Naive thymus-derived CD8-positive, alpha-beta T cell (primary cell): ENCODE measurements at regions of chr1 and their contacts with region 1.

Region 1: GRCh38 chr1:27489910-27490741 is at the start of gene WASF2:
- DNase-seq: peak; percentile 93 to 99 (median 97)
- ATAC-seq: peak; percentile 91 to 95
- H3K4me3 Mint-ChIP-seq: peak within 1 kb of the TSS; percentile 92 to 99 (median 96)
- H3K27ac Mint-ChIP-seq: peak within 1 kb of the TSS; percentile 97 to 100 (median 99)
- H3K4me1 Mint-ChIP-seq: peaks cover 17 to 55% (median 38%) of the 10 kb centered on the region in 4 donors
- H3K27me3 Mint-ChIP-seq: no peaks in the 10 kb centered on the region
- polyA plus RNA-seq, gene WASF2: 54.8 to 68.9 (median 68.5) TPM

Region 2: GRCh38 chr1:27321813-27322577 is 168.1 kb before region 1 on chr1 and contains the start of gene TMEM222:
- POLR2A ChIA-PET with region 1: no interaction called
- DNase-seq: peak; percentile 95 to 98 (median 96)
- ATAC-seq: peak; percentile 96
- H3K4me3 Mint-ChIP-seq: peak within 1 kb of the TSS; percentile 93 to 99 (median 95)
- H3K27ac Mint-ChIP-seq: peak within 1 kb of the TSS; percentile 93 to 97 (median 96)
- H3K4me1 Mint-ChIP-seq: peaks cover 18 to 54% (median 48%) of the 10 kb centered on the region in 4 donors
- H3K27me3 Mint-ChIP-seq: peaks cover 0 to 8% (median 0%) of the 10 kb centered on the region in 5 donors
- polyA plus RNA-seq, gene TMEM222: 54.1 to 57.1 (median 56.9) TPM

Region 3: DNA sequence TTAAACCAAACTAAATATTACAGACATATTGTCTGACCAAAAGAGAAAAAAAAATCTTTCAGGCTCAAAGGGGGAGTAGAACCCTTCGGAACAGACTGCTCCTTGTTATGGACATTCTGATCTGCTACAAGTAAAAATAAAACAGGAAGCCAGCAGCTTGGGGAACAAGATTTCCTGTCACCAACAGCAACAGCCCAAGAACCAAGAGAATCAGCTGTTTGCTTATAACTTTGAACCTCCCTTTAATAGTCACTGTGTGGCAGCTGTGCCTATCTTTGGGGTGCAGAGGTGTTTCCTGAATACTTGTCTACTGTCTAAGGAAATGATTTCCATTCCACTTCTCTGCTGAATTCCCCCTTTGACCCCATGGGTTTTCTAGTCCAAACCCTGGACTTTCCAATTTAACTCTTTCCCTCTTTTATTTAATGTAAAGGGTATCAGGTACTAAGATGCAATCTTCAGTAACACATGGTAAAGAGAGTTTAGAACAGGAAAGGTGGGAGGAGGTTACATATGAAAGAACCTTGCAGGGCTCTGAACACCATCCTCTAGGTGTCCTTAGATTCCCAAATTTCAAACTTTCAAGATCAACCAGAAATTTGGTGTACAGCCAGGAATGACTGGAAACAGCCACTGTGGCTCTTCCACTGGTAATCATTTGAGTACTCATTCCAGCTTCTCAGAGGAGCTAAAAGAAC is 59.1 kb before region 1 on chr1:
- POLR2A ChIA-PET with region 1: interaction called, 24 read pairs
- DNase-seq: peak in 6 of 10 donors; percentile 30 to 68 (median 42)
- ATAC-seq: peak; percentile 74 to 85
- H3K4me3 Mint-ChIP-seq: peak overlapping the region; percentile 29 to 91 (median 77)
- H3K27ac Mint-ChIP-seq: peak overlapping the region; percentile 40 to 96 (median 90)
- H3K4me1 Mint-ChIP-seq: peaks cover 42 to 95% (median 88%) of the 10 kb centered on the region in 4 donors
- H3K27me3 Mint-ChIP-seq: no peaks in the 10 kb centered on the region

Region 4: GRCh38 chr1:27436204-27437159 is 53.6 kb before region 1 on chr1:
- POLR2A ChIA-PET with region 1: interaction called, 24 read pairs
- DNase-seq: peak in 3 of 10 donors; percentile 12 to 50 (median 48)
- ATAC-seq: peak; percentile 91 to 98
- H3K4me3 Mint-ChIP-seq: peak overlapping the region; percentile 59 to 87 (median 71)
- H3K27ac Mint-ChIP-seq: peak overlapping the region; percentile 61 to 93 (median 85)
- H3K4me1 Mint-ChIP-seq: peaks cover 34 to 85% (median 74%) of the 10 kb centered on the region in 4 donors
- H3K27me3 Mint-ChIP-seq: no peaks in the 10 kb centered on the region

Region 5: DNA sequence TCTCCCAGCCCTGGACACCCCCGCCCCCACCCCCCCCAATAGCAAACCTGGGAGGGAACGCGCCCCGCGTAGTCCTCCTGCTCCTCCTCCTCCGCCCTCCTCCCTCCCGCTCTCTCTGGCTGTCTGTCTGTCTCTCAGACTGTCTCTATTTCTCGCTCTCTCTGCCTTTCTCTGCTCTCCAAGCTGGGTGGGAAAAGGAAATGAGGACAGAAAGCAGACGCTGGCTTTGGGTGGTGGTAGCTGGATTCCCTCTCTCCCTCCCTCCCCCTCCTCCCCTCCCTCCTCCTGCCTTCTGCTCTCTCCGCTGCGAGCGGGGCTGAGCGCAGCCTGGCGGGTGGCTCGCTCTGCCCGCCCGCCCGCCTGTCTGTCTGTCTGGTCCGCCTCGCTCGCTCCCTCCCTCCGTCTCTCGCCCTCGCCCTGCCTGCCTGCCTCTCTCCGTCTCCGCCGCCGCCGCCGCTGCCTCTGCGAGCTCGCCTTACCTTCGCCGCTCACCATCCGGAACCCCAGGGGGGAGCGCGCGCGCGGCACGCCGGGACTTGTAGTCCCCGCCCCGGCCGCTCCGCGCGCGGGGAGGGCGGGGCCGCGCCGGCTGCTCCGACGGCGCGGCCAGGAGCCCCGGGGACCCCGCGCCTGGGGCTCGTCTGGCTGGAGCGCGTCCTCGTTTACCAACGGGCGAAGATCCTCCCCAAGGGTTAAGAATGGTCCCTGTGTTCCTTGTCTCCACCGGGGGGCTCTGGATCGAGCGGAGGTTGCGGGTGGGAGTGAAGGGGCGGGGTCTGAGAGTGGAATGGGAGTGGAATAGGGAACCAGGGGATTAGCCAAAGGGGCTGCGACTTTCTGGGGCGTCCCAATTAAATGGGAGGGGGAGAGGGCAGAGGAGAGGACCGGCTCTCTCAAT is 113.8 kb after region 1 on chr1 and contains the start of gene AHDC1:
- POLR2A ChIA-PET with region 1: interaction called, 13 read pairs
- DNase-seq: peak; percentile 85 to 95 (median 90)
- ATAC-seq: peak; percentile 85 to 87
- H3K4me3 Mint-ChIP-seq: peak within 1 kb of the TSS; percentile 89 to 96 (median 92)
- H3K27ac Mint-ChIP-seq: peak within 1 kb of the TSS; percentile 73 to 98 (median 91)
- H3K4me1 Mint-ChIP-seq: peaks cover 26 to 55% (median 37%) of the 10 kb centered on the region in 4 donors
- H3K27me3 Mint-ChIP-seq: no peaks in the 10 kb centered on the region
- polyA plus RNA-seq, gene AHDC1: 0.57 to 2.4 (median 1.0) TPM